A673 (cell line): ENCODE measurements at regions of chr3 and their contacts with region 1.

Region 1: DNA sequence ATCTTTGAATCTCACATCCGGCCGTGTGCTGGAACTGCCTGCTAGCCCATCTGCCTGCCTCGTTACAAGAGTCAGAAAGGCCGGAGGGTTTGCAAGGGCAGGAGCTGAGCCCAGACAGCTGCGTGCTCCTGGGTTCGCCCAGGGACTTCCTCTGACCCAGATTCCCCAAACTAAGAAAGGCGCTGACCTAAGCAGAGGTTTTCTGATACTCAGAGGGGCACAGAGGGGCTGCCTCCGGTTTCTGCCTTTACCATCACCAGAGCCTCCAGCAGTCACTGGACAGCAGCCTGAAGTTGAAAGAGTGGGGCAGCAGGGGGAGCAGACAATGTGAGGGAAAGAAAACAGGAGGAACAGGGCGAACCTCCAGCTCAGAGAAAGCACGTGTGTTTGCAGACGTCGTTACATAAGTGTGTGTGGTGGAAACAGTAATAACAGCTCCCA is 33.4 kb upstream of the RAD18 start:
- DNase-seq: no peak
- H3K4me3 ChIP-seq: no peak overlapping the region
- H3K27ac ChIP-seq: no peak overlapping the region
- H3K4me1 ChIP-seq: no peaks in the 10 kb centered on the region
- H3K27me3 ChIP-seq: peaks cover 19% of the 10 kb centered on the region
- CTCF ChIP-seq: no peak

Region 2: GRCh38 chr3:8972639-8973038 is 24.1 kb before region 1 on chr3:
- CTCF ChIA-PET with region 1: no interaction called
- POLR2A ChIA-PET with region 1: no interaction called
- intact Hi-C with region 1: no loop called
- DNase-seq: peak; percentile 83
- H3K4me3 ChIP-seq: no peak overlapping the region
- H3K27ac ChIP-seq: no peak overlapping the region
- H3K4me1 ChIP-seq: no peaks in the 10 kb centered on the region
- H3K27me3 ChIP-seq: peaks cover 2% of the 10 kb centered on the region
- CTCF ChIP-seq: no peak

Region 3: GRCh38 chr3:9067352-9067975 is 70.8 kb after region 1 on chr3:
- CTCF ChIA-PET with region 1: interaction called, 14 read pairs
- POLR2A ChIA-PET with region 1: no interaction called
- intact Hi-C with region 1: no loop called
- DNase-seq: peak; percentile 67
- H3K4me3 ChIP-seq: no peak overlapping the region
- H3K27ac ChIP-seq: no peak overlapping the region
- H3K4me1 ChIP-seq: no peaks in the 10 kb centered on the region
- H3K27me3 ChIP-seq: no peaks in the 10 kb centered on the region
- CTCF ChIP-seq: peak; percentile 93